ENCODE measurements at regions of chr7 and their contacts with region 1.

Region 1: DNA sequence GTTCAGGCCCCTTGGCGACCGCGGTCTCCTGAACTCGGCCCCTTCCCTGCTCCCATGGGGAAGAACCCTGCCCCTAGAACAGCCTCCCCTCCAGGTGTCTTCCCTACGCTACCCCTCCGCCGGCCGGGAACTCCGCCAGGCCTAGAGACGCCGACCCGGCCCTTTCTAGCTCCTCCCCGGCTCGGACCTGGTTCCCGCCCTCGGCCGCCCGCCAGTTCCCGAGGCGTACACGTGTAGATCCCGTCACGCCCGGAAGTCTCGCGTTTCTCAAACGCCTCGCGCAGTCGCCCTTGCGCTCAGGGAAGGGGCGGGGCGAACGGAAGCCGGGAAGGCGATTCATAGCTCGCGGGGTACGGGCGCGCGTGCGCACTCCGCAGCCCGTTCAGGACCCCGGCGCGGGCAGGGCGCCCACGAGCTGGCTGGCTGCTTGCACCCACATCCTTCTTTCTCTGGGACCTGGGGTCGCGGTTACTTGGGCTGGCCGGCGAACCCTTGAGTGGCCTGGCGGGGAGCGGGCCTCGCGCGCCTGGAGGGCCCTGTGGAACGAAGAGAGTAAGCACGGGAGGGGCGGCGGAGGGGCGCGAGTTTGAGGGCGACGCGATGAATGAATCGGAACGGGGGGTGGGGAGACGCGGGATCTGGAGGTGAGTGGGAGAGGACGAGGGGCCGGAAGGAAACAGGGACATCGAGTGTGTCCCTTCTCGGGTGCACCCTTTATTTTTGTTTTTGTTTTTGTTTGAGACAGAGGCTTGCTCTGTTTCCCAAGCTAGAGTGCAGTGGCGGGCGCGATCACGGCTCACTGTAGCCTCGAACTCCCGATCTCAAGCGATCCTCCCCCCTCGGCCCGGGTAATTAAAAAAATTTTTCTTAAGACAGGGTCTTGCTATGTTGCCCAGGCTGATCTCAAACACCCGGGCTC is at the start of gene POP7:
- DNase-seq: peak; percentile 100
- ATAC-seq: peak; percentile 97
- total RNA-seq, gene POP7: 30.0 TPM

Region 2: DNA sequence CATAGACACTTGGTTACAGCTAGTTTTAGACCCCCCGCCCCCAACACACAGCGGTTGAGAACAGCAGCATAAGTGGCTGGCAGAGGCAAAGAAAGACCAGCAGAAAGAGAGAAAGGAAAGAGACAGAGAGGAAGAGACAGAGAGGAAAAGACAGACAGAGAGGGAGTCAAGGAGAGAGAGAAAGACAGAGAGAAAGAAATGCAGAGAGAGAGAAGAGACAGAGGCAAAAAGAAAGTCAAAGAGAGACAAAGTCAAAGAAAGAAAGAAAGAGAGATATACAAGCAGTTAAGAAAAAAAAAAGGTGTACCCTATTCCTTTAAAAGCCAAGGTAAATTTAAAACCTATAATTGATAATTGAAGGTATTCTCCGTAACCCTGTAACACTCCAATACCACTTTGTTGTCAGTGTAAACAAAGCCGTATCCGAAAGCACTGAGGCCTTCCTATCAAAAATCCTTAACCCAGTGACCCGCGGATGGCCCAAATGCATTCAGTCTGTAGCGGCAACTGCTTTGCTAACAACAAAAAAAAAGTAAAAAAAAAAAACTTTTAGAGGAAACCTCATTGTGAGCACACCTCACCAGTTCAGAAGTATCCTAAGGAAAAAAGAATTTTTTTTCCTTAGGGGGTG is 134.6 kb after region 1 on chr7:
- intact Hi-C with region 1: no loop called
- DNase-seq: no peak
- ATAC-seq: no peak

Region 3: DNA sequence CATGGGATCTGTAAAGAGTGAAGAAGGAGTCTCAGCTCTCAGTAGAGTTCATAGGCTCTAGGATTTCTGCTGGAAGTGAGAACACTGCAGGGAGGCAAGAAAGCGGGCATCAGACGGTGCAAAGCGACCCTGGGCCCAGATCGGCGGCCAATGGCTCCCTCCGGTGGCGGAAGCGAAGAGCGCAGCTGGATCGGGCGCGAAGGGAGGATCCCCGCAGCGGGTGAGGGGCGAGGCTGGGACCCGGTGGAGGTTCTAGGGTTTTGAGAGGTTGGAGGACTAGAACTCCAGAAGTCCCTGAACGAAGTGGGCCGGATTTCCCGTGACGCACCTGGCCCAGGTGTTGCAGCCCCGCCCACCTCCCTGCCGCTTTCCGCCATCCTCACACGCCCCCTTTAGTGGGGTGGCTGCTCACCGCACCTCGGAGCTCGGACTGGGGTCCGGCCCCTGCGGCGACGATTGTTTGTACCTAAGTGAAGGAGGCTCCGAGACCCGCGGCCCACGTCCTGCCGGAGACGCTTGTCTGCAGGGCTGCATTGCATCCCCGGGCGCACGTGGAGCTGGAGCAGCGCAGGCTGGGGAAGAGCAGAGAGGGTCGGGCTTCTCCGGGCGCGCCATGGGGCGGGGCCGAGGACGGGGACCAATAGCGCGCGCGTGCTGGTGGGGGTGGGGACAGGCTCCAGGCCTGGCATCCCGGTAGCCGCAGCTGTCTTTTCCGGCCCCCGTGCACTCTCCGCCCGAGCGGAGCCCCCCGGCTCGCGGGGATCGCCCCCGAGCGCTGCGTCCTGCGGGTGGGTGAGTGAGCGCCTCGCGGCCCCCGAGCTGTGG is 146.2 kb after region 1 on chr7 and contains the start of gene SLC12A9:
- intact Hi-C with region 1: loop called (anchors 10 kb)
- DNase-seq: peak; percentile 95
- ATAC-seq: peak; percentile 100
- total RNA-seq, gene SLC12A9: 9.0 TPM

Measured in left ventricle myocardium superior (tissue), 1 donor.